Endothelial cell of umbilical vein (primary cell): ENCODE measurements at regions of chr6 and their contacts with region 1.

Region 1: DNA sequence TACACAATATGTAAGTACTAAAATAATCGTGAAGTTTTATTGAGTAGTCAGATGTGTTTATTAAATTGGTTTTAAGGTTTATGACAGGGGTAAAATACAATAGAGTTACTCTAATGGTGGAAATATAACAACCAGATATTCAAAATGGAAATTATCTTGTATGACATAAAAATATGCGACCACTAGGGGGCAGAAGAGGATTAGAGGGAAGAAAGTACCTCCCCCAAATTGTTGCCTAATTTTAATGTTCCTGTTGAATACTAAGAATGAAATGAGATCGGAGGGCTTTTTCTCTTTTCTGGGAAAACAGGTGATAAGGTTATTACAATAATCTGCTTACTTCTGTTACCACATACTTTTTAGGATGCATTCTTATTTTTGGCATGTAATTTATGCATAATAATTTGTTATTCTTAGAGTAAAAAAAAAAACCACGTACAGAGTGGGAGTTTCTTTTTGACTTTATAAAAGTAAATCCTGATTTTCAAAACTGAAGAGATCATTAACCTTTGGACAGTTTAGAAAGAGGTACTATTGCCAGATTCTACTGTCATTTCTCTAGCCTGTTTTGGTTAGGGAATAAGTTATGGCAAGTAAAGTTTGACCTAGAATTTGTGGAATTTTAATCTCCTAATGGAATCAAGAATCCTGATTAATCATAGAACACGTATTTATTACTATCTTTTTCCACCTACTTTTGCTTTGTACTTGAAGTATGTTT is 159.2 kb downstream of the CD109 start:
- DNase-seq: peak; percentile 50
- H3K4me3 ChIP-seq: no peak overlapping the region
- H3K27ac ChIP-seq: no peak overlapping the region
- H3K4me1 ChIP-seq: no peaks in the 10 kb centered on the region
- H3K27me3 ChIP-seq: no peaks in the 10 kb centered on the region
- CTCF ChIP-seq: peak; percentile 41 to 46
- POLR2A ChIP-seq: no peak

Region 2: GRCh38 chr6:73722318-73723060 is 132.7 kb before region 1 on chr6:
- CTCF ChIA-PET with region 1: no interaction called
- POLR2A ChIA-PET with region 1: interaction called, 11 read pairs
- dilution Hi-C with region 1: no loop called
- intact Hi-C with region 1: no loop called
- DNase-seq: peak; percentile 91
- H3K4me3 ChIP-seq: no peak overlapping the region
- H3K27ac ChIP-seq: peak overlapping the region; percentile 96
- H3K4me1 ChIP-seq: peaks cover 18% of the 10 kb centered on the region
- H3K27me3 ChIP-seq: no peaks in the 10 kb centered on the region
- CTCF ChIP-seq: no peak
- POLR2A ChIP-seq: no peak

Region 3: DNA sequence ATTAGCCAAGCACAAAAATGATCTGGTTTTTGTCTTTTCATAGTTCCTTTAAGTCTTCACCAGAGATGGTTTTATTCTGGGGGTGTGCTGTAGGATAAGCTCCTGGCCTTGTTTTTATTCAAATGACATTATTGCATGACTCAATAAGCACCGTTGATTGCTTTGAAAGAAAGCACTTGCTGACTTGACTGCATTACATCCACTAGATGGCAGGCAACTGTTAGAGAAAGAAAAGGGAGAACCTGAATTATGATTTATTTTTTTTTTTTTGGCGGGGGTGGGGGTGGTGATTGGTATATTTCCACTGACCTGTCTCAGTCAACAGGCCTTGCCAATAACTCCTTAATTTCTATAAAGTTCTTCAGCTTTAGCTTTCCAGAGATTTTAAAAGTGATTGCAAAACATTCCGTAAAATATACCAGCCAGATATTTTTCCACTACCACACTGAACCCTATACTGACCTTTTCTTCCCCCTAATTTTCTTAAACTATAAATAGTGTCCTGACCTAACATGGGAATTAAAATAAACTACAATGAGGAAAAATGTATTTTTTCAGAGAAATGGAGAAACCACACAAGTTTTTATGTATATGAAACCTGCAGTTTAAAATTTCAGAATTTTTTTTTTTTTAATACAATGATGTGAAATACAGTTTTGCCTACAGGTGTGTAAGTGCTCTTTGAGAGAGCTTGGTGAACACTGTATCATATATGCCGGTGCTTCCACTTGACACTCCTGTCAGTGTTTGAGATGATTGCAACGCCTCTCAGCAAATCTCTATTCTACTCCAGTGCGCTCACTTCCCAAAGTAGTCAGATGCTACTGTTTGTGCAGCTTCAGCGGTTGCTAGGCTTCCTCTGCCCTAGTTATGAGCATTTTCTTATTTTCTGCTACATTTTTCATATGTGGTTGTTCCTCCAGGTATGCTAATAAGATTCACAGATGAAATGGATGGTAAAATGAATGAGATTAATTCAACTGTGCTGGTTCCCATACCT is 115.1 kb after region 1 on chr6:
- CTCF ChIA-PET with region 1: no interaction called
- POLR2A ChIA-PET with region 1: no interaction called
- dilution Hi-C with region 1: no loop called
- intact Hi-C with region 1: loop called (anchors 2 kb)
- DNase-seq: peak; percentile 56
- H3K4me3 ChIP-seq: no peak overlapping the region
- H3K27ac ChIP-seq: no peak overlapping the region
- H3K4me1 ChIP-seq: peaks cover 8% of the 10 kb centered on the region
- H3K27me3 ChIP-seq: peaks cover 3 to 4% of the 10 kb centered on the region in 2 experiments
- CTCF ChIP-seq: peak; percentile 48 to 53
- POLR2A ChIP-seq: no peak